ENCODE measurements at regions of chr19 and their contacts with region 1.

Region 1: DNA sequence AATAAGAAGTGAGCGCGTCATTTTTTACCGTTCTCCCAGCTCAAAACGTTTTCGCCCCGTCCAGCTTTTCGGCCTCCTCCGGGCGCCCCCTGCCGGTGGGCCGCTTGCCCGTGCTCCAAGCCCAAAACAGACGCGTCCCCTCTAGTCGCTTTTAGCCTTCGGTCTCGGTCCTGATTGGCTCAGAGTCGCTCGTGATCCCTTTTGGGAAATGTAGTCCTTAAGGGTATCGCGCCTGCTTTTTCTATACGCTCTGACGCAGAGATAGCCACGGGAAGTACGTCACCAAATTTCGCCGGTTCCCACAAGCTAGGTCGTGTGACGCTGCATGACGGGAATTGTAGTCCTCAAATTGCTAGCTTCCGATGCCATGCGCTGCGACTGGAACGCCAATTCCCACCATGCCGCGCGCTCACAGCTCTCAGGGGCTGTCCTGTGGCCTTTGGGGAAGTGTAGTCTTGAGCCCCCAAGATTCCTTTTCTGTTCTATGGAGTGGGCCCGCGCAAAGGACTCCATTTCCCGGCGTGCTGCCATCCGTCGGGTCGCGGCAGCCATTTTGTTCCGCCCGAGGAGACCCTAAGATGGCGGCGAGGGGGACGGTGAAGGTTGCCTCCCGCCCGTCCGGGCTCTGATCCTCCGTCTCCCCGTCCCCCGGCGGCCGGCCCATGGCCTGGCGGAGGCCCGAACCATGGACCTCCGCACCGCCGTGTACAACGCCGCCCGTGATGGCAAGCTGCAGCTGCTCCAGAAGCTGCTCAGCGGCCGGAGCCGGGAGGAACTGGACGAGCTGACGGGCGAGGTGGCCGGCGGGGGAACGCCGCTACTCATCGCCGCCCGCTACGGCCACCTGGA is at the start of gene FEM1A:
- DNase-seq: peak; percentile 99 to 100 (median 100)

Region 2: GRCh38 chr19:4723367-4724187 is 67.8 kb before region 1 on chr19 and contains the start of gene DPP9:
- intact Hi-C with region 1: loop called (anchors 2 kb)
- DNase-seq: peak; percentile 90 to 100 (median 96)

Region 3: GRCh38 chr19:5138606-5139582 is 347.5 kb after region 1 on chr19:
- intact Hi-C with region 1: no loop called
- DNase-seq: peak in 24 of 42 donors; percentile 0 to 62 (median 36)

Measured in head of caudate nucleus (tissue), 42 donors.